Left cardiac atrium (tissue), 4 donors: ENCODE measurements at regions of chr4 and their contacts with region 1.

Region 1: DNA sequence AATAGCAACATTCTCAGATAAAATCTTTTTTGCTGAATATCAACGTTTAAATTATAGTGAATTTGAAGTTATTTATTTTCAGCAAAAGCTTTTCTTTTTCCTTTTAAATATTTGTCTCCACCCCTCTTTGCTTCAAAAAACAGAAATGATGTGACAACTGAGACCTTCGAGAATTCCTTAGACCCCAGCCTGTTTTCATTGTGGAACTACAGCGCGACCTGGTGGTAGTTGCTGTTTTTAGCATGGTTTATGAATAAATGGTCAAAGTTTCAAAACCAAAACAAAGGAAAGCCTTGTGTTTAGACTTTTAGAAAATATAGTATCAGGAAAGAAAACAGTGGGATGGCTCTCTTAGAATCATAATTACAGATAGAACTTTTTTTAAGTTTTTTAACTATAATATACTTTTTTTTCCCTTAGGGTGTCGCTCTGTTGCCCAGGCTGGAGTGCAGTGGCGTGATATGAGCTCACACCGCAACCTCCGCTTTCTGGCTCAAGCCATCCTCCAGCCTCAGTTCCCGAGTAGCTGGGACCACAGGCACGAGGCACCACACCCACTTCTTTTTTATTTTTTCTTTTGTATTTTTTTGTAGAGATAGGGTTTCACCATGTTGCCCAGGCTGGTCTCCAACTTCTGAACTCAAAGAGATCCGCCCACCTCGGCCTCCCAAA is 26.8 kb upstream of the TMEM184C start:
- DNase-seq: peak; percentile 61
- ATAC-seq: peak; percentile 61 to 69

Region 2: DNA sequence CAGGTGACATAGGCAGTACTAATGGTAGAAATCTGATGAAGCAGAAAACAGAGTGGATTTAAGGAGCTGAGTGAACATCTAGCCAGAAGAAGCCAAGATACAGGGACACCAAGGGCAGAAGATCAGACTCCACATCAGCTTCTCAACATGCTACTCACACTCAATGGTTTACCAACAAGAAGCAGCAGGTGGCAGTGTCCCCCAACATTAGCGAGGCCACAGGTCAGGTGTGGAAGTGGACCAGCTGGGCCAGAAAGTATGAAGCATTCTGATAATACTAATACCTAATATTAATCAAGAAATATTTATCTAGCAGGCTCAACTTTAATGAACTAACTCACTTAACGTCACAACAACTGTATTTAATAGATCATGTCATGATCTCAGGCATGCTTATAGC is 571.3 kb before region 1 on chr4:
- intact Hi-C with region 1: loop called in 1 of 2 experiments (anchors 5 kb)
- DNase-seq: peak; percentile 60
- ATAC-seq: peak; percentile 84 to 85

Region 3: DNA sequence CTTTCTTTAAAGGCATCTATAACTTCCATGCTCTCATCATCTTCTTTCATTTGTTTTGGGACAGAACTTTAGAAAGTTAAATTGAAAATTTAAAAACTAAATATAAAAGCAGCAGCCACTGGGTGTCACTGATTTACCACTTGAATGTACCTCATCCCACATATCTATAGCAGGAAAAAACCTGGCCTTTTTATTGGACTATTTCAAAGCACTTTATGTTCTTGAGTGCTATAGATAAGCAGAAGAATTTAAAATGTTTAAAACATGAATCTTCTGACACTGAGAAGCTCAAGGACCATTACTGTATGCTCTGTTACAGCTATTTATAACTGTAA is 479.4 kb before region 1 on chr4:
- intact Hi-C with region 1: loop called (anchors 5 to 10 kb)
- DNase-seq: no peak
- ATAC-seq: peak; percentile 46 to 67

Region 4: DNA sequence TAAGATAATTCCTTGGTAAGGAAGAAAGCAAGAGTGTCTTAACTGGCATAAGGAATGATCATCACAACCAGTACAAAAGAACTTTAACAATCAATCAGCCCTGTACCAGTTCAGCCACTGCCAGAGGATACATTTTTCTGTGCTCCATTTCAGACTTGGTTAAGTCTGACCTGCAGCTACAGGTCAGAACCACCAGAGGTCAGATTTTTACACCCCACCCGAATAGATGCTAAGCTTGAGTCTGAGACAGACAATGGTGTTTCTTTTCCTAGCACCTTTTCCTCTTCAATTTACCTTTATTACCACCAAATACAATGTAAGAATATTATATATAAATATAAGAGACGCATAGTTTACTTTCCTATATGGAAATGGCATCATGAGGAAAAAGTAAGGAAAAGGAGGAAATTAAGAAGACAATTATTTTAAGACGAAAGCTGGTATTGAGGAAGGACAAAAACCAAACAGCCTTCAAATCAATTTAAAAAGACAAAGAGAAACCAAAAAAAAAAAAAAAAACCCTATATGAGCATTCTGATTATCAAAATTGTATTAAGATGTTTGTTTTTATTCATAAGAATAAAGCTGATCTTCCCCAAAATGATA is 429.4 kb before region 1 on chr4:
- intact Hi-C with region 1: loop called in 1 of 2 experiments (anchors 2 kb)
- DNase-seq: no peak
- ATAC-seq: peak; percentile 48 to 69

Region 5: DNA sequence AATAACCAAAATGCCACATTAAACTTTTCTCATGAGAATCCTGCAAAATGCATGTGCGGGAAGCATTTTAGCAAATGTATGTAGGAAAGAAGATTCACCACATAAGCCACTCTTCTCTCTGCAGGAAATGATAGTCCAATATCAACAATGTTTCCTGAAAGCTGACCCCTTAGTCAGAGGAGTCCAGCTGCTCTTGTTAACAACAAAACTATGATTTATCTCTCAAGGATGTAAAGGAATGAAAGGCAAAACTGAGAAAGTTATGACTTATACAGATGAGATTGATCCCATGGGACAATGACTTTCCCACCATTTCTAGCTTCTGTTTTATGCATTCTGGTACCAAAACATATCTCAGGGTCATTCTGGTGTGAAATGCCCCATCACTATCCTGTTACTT is 234.5 kb before region 1 on chr4:
- intact Hi-C with region 1: no loop called
- DNase-seq: no peak
- ATAC-seq: peak in 1 of 2 donors; percentile 26

Region 6: DNA sequence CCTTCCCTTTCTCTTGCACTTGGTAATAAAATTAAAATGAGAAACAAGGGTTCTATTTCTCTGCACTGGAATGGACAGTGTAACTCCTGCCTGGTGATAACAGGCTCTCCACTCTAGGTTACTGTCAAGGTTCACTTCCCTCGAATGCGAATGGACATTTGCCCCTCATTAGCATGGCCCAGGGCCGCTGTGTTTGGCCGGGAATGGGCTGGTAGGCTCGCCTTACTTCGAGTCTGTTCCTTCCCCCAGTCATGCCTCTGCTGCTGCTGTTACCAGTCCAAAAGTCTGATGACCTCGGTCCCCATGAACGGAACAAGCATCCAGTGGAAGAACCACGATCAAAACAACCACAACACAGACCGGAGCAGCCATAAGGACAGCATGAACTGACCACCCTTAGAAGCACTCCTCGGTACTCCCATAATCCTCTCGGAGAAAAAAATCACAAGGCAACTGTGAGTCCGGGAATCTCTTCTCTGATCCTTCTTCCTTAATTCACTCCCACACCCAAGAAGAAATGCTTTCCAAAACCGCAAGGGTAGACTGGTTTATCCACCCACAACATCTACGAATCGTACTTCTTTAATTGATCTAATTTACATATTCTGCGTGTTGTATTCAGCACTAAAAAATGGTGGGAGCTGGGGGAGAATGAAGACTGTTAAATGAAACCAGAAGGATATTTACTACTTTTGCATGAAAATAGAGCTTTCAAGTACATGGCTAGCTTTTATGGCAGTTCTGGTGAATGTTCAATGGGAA is 48.0 kb before region 1 on chr4:
- intact Hi-C with region 1: no loop called
- DNase-seq: no peak
- ATAC-seq: no peak

Region 7: GRCh38 chr4:147760695-147761094 is 170.3 kb after region 1 on chr4:
- intact Hi-C with region 1: no loop called
- DNase-seq: no peak
- ATAC-seq: peak; percentile 28 to 41

Region 8: GRCh38 chr4:148618856-148619255 is 1028.5 kb after region 1 on chr4:
- intact Hi-C with region 1: no loop called
- DNase-seq: no peak
- ATAC-seq: no peak